PC-3 (cell line): ENCODE measurements at regions of chr10 and their contacts with region 1.

Region 1: DNA sequence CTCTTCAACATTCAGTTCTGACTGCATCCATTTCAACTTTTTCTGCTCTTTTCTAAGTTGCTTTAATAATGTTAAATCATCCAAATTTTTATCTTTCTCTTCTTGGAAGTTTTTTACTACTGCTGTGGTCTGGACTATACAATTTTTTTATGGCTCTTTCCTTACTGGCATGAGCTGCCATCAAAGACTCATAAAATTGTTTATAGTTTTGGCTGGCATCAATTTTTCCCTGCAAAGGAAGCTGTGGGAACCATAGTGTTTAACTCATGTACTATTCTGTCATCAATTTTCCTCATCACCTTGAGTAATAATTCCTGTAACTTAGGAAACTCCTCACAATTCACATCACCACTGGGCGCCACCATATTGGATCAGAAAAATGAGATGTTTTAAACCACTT is 77.6 kb upstream of the A1CF start:
- DNase-seq: no peak
- ATAC-seq: peak; percentile 81
- H3K4me3 ChIP-seq: no peak overlapping the region
- H3K27ac ChIP-seq: no peak overlapping the region
- H3K4me1 ChIP-seq: no peaks in the 10 kb centered on the region
- H3K27me3 ChIP-seq: peaks cover 42% of the 10 kb centered on the region
- CTCF ChIP-seq: no peak

Region 2: GRCh38 chr10:50937230-50937907 is 25.7 kb before region 1 on chr10:
- CTCF ChIA-PET with region 1: no interaction called
- POLR2A ChIA-PET with region 1: no interaction called
- intact Hi-C with region 1: loop called (anchors 1 kb)
- DNase-seq: peak; percentile 90
- ATAC-seq: peak; percentile 82
- H3K4me3 ChIP-seq: no peak overlapping the region
- H3K27ac ChIP-seq: no peak overlapping the region
- H3K4me1 ChIP-seq: no peaks in the 10 kb centered on the region
- H3K27me3 ChIP-seq: peaks cover 55% of the 10 kb centered on the region
- CTCF ChIP-seq: peak; percentile 98